ENCODE measurements at regions of chr15 and their contacts with region 1.

Region 1: GRCh38 chr15:99733268-99734039 is at the start of gene LYSMD4:
- DNase-seq: peak; percentile 97 to 98 (median 98)
- H3K4me3 ChIP-seq: peak within 1 kb of the TSS; percentile 65 to 99 (median 94)
- H3K27ac ChIP-seq: peak within 1 kb of the TSS in 57 of 59 donors; percentile 10 to 93 (median 80)
- H3K27me3 ChIP-seq: no peaks in the 10 kb centered on the region
- CTCF ChIP-seq: peak in 28 of 56 donors; percentile 12 to 50 (median 26)
- total RNA-seq, gene LYSMD4: 13.4 to 39.6 (median 21.1) TPM

Region 2: GRCh38 chr15:99104788-99105513 is 628.5 kb before region 1 on chr15 and contains the start of gene SYNM:
- intact Hi-C with region 1: loop called (anchors 5 kb)
- DNase-seq: peak; percentile 20 to 90 (median 73)
- H3K4me3 ChIP-seq: peak within 1 kb of the TSS; percentile 53 to 83 (median 74)
- H3K27ac ChIP-seq: peak within 1 kb of the TSS in 57 of 59 donors; percentile 41 to 97 (median 86)
- H3K27me3 ChIP-seq: no peaks in the 10 kb centered on the region
- CTCF ChIP-seq: peak; percentile 50 to 98 (median 86)
- total RNA-seq, gene SYNM: 54.7 to 162 (median 78.7) TPM

Region 3: GRCh38 chr15:99250494-99251435 is 482.7 kb before region 1 on chr15:
- intact Hi-C with region 1: loop called in 1 of 2 experiments (anchors 10 kb)
- DNase-seq: peak; percentile 95 to 99 (median 98)
- H3K4me3 ChIP-seq: peak overlapping the region; percentile 52 to 100 (median 88)
- H3K27ac ChIP-seq: peak overlapping the region; percentile 12 to 97 (median 92)
- H3K27me3 ChIP-seq: no peaks in the 10 kb centered on the region
- CTCF ChIP-seq: peak in 31 of 56 donors; percentile 5 to 65 (median 29)

Region 4: GRCh38 chr15:99273801-99274200 is 459.7 kb before region 1 on chr15:
- intact Hi-C with region 1: loop called in 1 of 2 experiments (anchors 5 kb)
- DNase-seq: no peak
- H3K4me3 ChIP-seq: peak overlapping the region in 2 of 59 donors; percentile 10 to 27
- H3K27ac ChIP-seq: peak overlapping the region in 1 of 59 donors; percentile 23
- H3K27me3 ChIP-seq: no peaks in the 10 kb centered on the region
- CTCF ChIP-seq: no peak

Region 5: GRCh38 chr15:99282121-99282520 is 451.3 kb before region 1 on chr15:
- intact Hi-C with region 1: loop called in 1 of 2 experiments (anchors 5 kb)
- DNase-seq: no peak
- H3K4me3 ChIP-seq: no peak overlapping the region
- H3K27ac ChIP-seq: no peak overlapping the region
- H3K27me3 ChIP-seq: no peaks in the 10 kb centered on the region
- CTCF ChIP-seq: no peak

Region 6: GRCh38 chr15:99704444-99704838 is 29.0 kb before region 1 on chr15:
- intact Hi-C with region 1: loop called (anchors 2 kb)
- DNase-seq: peak in 1 of 10 donors; percentile 46
- H3K4me3 ChIP-seq: peak overlapping the region in 17 of 59 donors; percentile 2 to 51 (median 22)
- H3K27ac ChIP-seq: peak overlapping the region in 53 of 59 donors; percentile 13 to 93 (median 81)
- H3K27me3 ChIP-seq: no peaks in the 10 kb centered on the region
- CTCF ChIP-seq: peak; percentile 78 to 95 (median 88)

Region 7: GRCh38 chr15:99719096-99719541 is 14.3 kb before region 1 on chr15:
- intact Hi-C with region 1: loop called in 1 of 2 experiments (anchors 2 kb)
- DNase-seq: no peak
- H3K4me3 ChIP-seq: no peak overlapping the region
- H3K27ac ChIP-seq: no peak overlapping the region
- H3K27me3 ChIP-seq: no peaks in the 10 kb centered on the region
- CTCF ChIP-seq: no peak